ENCODE measurements at regions of chr1 and their contacts with region 1.

Region 1: DNA sequence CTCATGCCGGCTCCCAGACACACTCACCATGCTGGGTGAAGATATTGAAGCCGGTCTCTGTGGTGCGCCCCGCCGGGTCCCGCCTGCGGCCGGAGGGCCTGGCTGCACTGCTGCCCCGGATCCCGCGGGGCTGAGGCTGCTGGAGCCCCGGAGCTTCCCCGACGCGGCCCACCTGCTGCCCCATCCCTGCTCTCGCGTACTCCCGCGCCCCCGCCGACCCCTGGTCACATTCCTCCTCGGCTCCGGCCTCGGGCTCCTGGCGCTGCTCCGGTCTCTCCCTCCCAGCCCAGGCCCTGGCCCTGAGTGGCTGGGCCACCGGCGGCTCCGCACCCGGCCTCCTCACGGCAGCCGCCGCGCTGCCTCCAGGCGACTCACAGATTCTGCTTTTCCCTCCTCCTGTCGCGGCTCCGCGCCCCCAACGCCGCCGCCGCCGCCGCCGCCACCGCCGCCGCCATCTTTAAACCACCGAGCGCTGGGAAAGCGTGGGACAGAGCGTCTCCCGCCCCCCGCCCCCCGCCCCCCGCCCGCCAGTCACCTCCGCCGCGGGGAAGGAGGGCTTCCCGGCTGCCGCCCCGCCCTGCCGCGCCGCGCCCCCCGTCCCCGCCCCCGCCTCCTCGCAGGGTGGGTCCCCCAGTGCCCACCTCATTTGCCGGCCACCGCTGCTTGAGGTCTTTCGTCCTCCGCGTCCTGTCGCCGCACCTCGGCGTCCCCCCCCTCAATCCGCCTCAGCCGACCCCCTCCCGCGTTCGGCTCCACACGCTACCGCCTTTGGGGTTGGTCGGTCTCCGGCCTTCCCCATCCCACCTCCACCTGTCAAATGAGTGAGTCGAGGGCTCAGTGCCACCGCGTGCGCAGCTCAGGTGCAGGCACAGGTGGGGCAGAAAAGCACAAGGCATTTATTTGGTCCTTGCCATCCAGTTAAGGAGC is at the start of gene ABL2:
- DNase-seq: no peak
- H3K4me3 ChIP-seq: peak within 1 kb of the TSS; percentile 85 to 95 (median 93)
- H3K27ac ChIP-seq: peak within 1 kb of the TSS; percentile 44
- H3K4me1 ChIP-seq: peaks cover 31% of the 10 kb centered on the region
- H3K27me3 ChIP-seq: peaks cover 2% of the 10 kb centered on the region
- CTCF ChIP-seq: no peak
- total RNA-seq, gene ABL2: 78.2 to 161 TPM

Region 2: DNA sequence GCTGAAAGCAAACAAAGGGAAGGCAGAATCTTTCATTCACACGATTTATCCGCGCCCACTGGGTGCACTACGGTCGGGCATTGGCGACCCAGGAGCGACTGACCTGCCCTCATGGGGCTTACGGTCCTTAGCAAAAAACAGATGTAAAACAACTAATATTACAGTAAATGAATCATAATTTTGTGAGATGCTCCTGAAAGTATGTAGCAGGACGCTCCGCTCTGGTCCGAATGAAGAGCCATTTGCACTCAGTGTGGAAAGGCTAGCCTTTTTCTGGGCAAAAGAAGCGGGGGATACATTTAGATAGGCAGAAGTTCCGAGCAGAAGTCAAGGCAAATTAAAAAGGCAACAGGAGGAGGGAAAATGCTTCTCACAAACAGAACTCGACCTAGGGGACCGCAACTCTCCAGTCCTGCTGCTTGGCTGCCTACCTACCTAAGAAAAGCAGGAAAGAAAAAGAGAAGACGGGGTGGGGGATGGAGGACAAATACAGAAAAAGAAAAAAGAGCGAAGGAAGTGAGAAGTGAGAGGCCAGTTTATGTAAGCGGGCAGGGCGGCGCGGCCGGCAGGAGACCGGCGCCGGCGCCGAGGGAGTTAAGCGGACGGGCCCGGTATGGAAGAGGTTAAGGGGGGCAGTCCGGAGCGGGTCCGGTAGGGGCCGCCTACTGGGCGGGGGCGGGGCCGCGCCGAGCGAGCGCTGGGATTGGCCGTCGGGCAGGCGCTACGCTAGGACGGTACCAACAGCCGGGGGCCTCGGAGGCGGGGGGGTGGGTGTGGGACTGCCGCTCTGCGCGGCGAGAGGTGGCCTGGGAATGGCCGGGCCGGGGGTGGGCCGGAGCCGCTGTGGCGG is 204.1 kb before region 1 on chr1 and contains the start of gene FAM20B:
- CTCF ChIA-PET with region 1: no interaction called
- dilution Hi-C with region 1: no loop called
- in situ Hi-C with region 1: no loop called
- intact Hi-C with region 1: loop called (anchors 5 kb)
- DNase-seq: peak; percentile 89
- H3K4me3 ChIP-seq: peak within 1 kb of the TSS; percentile 67 to 94 (median 71)
- H3K27ac ChIP-seq: peak within 1 kb of the TSS; percentile 77
- H3K4me1 ChIP-seq: no peaks in the 10 kb centered on the region
- H3K27me3 ChIP-seq: no peaks in the 10 kb centered on the region
- CTCF ChIP-seq: no peak
- total RNA-seq, gene FAM20B: 36.8 to 44.3 TPM

Region 3: DNA sequence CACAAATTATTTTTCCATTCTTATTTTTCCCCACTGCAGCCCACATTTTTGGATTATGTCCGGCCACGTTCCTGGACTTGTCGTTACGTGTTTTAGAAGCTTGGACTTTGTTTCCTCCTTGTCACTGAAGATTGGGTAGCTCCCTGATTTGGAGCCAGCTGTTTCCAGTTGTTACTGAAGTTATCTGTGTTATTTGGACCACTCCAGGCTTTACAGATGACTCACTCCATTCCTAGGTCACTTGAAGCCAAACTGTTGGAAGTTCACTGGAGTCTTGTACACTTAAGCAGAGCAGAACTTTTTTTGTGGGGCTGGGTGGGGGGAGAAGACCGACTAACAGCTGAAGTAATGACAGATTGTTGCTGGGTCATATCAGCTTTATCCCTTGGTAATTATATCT is 124.1 kb after region 1 on chr1:
- CTCF ChIA-PET with region 1: no interaction called
- dilution Hi-C with region 1: loop called (anchors 5 kb)
- in situ Hi-C with region 1: no loop called
- intact Hi-C with region 1: no loop called
- DNase-seq: peak; percentile 21
- H3K4me3 ChIP-seq: no peak overlapping the region
- H3K27ac ChIP-seq: no peak overlapping the region
- H3K4me1 ChIP-seq: peaks cover 8% of the 10 kb centered on the region
- H3K27me3 ChIP-seq: no peaks in the 10 kb centered on the region
- CTCF ChIP-seq: no peak